CD8-positive, alpha-beta T cell (primary cell): ENCODE measurements at regions of chr10 and their contacts with region 1.

Region 1: GRCh38 chr10:69123747-69124562 is at the start of gene VPS26A:
- DNase-seq: peak; percentile 95 to 99 (median 98)
- ATAC-seq: peak; percentile 97
- H3K4me3 ChIP-seq: peak within 1 kb of the TSS; percentile 88 to 90
- H3K4me3 Mint-ChIP-seq: peak within 1 kb of the TSS; percentile 94
- H3K27ac ChIP-seq: peak within 1 kb of the TSS; percentile 94
- H3K27ac Mint-ChIP-seq: peak within 1 kb of the TSS; percentile 97
- H3K4me1 ChIP-seq: peaks cover 27% of the 10 kb centered on the region
- H3K4me1 Mint-ChIP-seq: peaks cover 30% of the 10 kb centered on the region
- H3K27me3 ChIP-seq: no peaks in the 10 kb centered on the region
- H3K27me3 Mint-ChIP-seq: no peaks in the 10 kb centered on the region
- CTCF ChIP-seq: peak; percentile 54
- total RNA-seq, gene VPS26A: 48.6 to 50.3 TPM

Region 2: DNA sequence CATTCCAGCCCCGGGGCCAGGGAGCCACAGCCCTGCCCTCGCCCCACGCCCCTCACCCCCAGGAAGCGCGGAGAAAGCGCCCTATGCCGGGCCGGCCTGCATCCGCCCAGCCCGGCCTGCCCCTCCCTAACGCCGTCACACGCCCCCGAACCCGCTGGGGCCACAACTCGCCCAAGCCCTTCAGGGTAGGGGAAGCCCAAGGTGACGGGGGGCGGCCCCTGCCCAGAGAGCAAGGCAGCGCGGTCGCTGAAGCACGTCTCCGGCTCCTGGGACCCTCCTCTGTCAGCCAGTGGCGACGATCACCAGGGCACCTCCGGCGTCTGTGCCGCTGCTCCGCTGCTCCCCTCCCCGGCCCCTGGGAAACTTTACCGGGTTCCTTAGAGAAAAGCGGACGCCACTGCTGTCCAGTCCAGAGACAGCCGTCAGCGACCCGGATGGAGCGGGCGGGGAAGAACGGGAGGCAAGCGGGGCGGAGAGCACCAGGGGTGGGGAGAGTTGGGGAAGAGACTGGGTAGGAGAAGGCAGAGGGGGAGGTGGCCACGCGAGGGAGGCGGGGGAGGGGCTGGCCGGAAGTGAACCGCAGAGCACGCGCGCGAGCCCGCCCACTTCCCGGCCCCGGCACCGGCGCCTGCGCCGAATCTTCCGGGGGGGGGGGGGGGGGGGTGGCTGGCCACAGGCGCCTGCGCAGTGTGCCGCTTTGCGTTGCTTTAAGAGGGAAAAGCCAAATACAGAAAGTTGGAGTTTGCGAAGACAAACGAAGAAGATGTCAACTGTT is 1049.0 kb before region 1 on chr10 and contains the start of gene HERC4:
- CTCF ChIA-PET with region 1: no interaction called
- POLR2A ChIA-PET with region 1: no interaction called
- intact Hi-C with region 1: loop called in 1 of 2 experiments (anchors 10 kb)
- DNase-seq: peak; percentile 83 to 96 (median 90)
- ATAC-seq: peak; percentile 90
- H3K4me3 ChIP-seq: peak within 1 kb of the TSS; percentile 96
- H3K4me3 Mint-ChIP-seq: peak within 1 kb of the TSS; percentile 96
- H3K27ac ChIP-seq: peak within 1 kb of the TSS; percentile 91 to 96
- H3K27ac Mint-ChIP-seq: peak within 1 kb of the TSS; percentile 93
- H3K4me1 ChIP-seq: peaks cover 38% of the 10 kb centered on the region
- H3K4me1 Mint-ChIP-seq: peaks cover 40% of the 10 kb centered on the region
- H3K27me3 ChIP-seq: no peaks in the 10 kb centered on the region
- H3K27me3 Mint-ChIP-seq: no peaks in the 10 kb centered on the region
- CTCF ChIP-seq: no peak
- total RNA-seq, gene HERC4: 28.4 to 29.2 TPM

Region 3: DNA sequence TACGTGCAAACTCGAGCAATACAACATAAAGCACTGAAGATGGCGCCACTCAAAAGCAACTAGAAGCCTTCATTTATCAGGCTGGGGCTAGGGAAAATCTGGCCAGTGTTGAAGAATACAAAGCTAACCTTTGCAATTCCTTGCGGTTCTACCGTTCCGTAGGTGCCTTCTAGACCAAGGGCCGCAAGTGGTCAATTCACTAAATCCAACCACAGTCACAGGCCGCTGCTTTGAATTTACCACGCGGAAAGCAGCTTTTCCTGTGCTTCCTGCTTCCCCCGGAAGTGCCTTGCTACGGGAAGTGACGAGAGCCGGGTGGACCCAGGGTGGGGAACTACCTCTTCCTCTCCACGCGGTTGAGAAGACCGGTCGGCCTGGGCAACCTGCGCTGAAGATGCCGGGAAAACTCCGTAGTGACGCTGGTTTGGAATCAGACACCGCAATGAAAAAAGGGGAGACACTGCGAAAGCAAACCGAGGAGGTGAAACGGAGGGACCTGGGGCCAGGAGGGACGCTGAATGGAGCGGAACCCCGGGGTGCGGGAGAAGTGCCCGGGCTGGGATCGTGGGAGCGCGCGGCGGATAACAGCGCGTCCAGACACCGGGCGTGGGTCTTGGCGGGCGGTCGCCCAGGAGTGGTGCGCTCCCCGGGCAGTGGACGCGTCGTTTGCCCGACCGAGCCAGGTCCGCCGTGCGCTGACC is 168.0 kb before region 1 on chr10 and contains the start of gene DDX21:
- CTCF ChIA-PET with region 1: no interaction called
- POLR2A ChIA-PET with region 1: interaction called, 4 read pairs
- intact Hi-C with region 1: loop called (anchors 1 to 2 kb)
- DNase-seq: peak; percentile 68 to 95 (median 89)
- ATAC-seq: peak; percentile 75
- H3K4me3 ChIP-seq: peak within 1 kb of the TSS; percentile 85 to 96
- H3K4me3 Mint-ChIP-seq: peak within 1 kb of the TSS; percentile 100
- H3K27ac ChIP-seq: peak within 1 kb of the TSS; percentile 95 to 99
- H3K27ac Mint-ChIP-seq: peak within 1 kb of the TSS; percentile 100
- H3K4me1 ChIP-seq: peaks cover 21% of the 10 kb centered on the region
- H3K4me1 Mint-ChIP-seq: peaks cover 41% of the 10 kb centered on the region
- H3K27me3 ChIP-seq: no peaks in the 10 kb centered on the region
- H3K27me3 Mint-ChIP-seq: no peaks in the 10 kb centered on the region
- CTCF ChIP-seq: peak; percentile 71
- total RNA-seq, gene DDX21: 175 to 185 TPM

Region 4: DNA sequence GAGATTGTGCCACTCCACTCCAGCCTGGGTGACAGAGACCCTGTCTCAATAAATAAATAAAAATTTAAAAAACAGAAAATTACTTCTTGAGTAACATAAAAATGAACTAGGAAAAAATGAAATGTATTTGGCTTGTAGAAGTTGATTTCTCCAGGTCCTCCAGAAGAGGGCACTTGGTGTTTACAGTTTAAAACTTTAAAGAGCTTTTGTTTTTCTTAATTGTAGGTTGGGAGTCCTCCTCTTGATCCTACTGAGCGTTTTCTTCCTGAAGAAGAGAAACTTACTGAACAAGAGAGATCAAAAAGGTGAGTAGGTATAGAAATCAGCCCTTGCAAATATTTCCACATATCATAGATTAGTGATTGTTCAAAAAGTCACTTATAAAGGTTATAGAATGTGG is 119.1 kb before region 1 on chr10:
- CTCF ChIA-PET with region 1: interaction called, 17 read pairs
- POLR2A ChIA-PET with region 1: interaction called, 3 read pairs
- intact Hi-C with region 1: loop called (anchors 1 kb)
- DNase-seq: peak in 2 of 9 experiments; percentile 61 to 74
- ATAC-seq: peak; percentile 87
- H3K4me3 ChIP-seq: no peak overlapping the region
- H3K4me3 Mint-ChIP-seq: no peak overlapping the region
- H3K27ac ChIP-seq: no peak overlapping the region
- H3K27ac Mint-ChIP-seq: no peak overlapping the region
- H3K4me1 ChIP-seq: no peaks in the 10 kb centered on the region
- H3K4me1 Mint-ChIP-seq: peaks cover 2% of the 10 kb centered on the region
- H3K27me3 ChIP-seq: no peaks in the 10 kb centered on the region
- H3K27me3 Mint-ChIP-seq: no peaks in the 10 kb centered on the region
- CTCF ChIP-seq: peak; percentile 76

Region 5: DNA sequence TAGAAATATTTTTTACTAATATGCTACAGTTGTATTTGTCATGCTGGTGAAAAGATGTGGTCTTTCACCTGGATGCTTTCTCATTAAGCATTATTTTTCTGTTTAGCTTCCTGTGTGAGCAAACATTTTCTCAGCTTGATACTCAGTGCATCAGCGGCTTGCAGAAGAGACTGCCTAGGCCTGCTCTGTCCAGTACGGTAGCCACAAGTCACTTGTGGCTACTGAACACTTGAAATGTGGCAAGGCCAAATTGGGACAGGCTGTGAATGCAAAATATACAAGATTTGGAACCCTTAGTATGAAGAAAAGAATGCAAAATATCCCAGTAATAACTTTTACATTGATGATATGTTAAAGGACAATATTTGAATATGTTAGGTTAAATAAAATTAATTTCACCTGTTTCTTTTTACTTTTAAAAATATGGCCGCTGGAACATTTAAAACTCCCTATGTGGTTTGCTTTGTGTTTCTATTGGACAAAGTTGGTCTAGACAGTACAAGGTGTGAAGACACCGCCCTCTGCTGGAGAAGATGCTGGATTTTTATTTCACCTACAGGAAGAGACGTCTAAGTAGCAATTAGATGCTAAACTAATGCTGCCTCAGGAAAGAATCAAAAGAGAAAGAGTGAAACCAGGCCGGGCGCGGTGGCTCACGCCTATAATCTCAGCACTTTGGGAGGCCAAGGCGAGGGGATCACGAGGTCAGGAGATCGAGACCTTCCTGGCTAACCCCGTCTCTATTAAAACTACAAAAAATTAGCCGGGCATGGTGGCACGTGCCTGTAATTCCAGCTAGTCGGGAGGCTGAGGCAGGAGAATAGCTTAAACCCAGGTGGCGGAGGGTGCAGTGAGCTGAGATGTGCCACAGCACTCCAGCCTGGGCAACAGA is 30.8 kb before region 1 on chr10:
- CTCF ChIA-PET with region 1: interaction called, 12 read pairs
- POLR2A ChIA-PET with region 1: interaction called, 3 read pairs
- intact Hi-C with region 1: loop called (anchors 1 kb)
- DNase-seq: peak; percentile 66 to 93 (median 83)
- ATAC-seq: peak; percentile 21
- H3K4me3 ChIP-seq: no peak overlapping the region
- H3K4me3 Mint-ChIP-seq: peak overlapping the region; percentile 26
- H3K27ac ChIP-seq: peak overlapping the region in 1 of 2 experiments; percentile 68
- H3K27ac Mint-ChIP-seq: peak overlapping the region; percentile 93
- H3K4me1 ChIP-seq: peaks cover 47% of the 10 kb centered on the region
- H3K4me1 Mint-ChIP-seq: peaks cover 69% of the 10 kb centered on the region
- H3K27me3 ChIP-seq: no peaks in the 10 kb centered on the region
- H3K27me3 Mint-ChIP-seq: no peaks in the 10 kb centered on the region
- CTCF ChIP-seq: peak; percentile 76

Region 6: DNA sequence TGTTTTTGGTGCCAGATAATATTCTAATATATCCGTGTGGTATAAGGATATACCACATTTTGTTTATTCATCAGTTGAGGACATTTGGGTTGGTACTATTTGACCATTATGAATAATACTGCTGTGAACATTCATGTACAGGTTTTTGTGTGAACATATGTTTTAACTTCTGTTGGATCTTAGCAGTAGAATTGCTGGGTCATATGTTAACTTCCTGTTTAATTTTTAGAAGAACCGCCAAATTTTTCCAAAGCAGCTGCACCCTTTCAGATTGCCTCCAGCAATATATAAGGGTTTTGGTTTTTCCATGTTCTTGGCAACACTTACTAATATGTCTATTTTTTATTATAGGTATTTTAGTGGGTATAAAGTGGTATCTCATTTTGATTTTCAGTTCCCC is 22.8 kb after region 1 on chr10:
- CTCF ChIA-PET with region 1: no interaction called
- POLR2A ChIA-PET with region 1: no interaction called
- intact Hi-C with region 1: no loop called
- DNase-seq: no peak
- ATAC-seq: no peak
- H3K4me3 ChIP-seq: no peak overlapping the region
- H3K4me3 Mint-ChIP-seq: no peak overlapping the region
- H3K27ac ChIP-seq: no peak overlapping the region
- H3K27ac Mint-ChIP-seq: peak overlapping the region; percentile 74
- H3K4me1 ChIP-seq: peaks cover 9% of the 10 kb centered on the region
- H3K4me1 Mint-ChIP-seq: peaks cover 48% of the 10 kb centered on the region
- H3K27me3 ChIP-seq: no peaks in the 10 kb centered on the region
- H3K27me3 Mint-ChIP-seq: no peaks in the 10 kb centered on the region
- CTCF ChIP-seq: no peak

Region 7: GRCh38 chr10:69179743-69180524 is 56.0 kb after region 1 on chr10 and contains the start of gene SUPV3L1:
- CTCF ChIA-PET with region 1: no interaction called
- POLR2A ChIA-PET with region 1: no interaction called
- intact Hi-C with region 1: loop called (anchors 1 to 2 kb)
- DNase-seq: peak; percentile 71 to 96 (median 87)
- ATAC-seq: peak; percentile 70
- H3K4me3 ChIP-seq: peak within 1 kb of the TSS; percentile 88 to 90
- H3K4me3 Mint-ChIP-seq: peak within 1 kb of the TSS; percentile 91
- H3K27ac ChIP-seq: peak within 1 kb of the TSS; percentile 97 to 98
- H3K27ac Mint-ChIP-seq: peak within 1 kb of the TSS; percentile 99
- H3K4me1 ChIP-seq: peaks cover 24% of the 10 kb centered on the region
- H3K4me1 Mint-ChIP-seq: peaks cover 41% of the 10 kb centered on the region
- H3K27me3 ChIP-seq: no peaks in the 10 kb centered on the region
- H3K27me3 Mint-ChIP-seq: no peaks in the 10 kb centered on the region
- CTCF ChIP-seq: no peak
- total RNA-seq, gene SUPV3L1: 89.3 to 99.6 TPM

Region 8: DNA sequence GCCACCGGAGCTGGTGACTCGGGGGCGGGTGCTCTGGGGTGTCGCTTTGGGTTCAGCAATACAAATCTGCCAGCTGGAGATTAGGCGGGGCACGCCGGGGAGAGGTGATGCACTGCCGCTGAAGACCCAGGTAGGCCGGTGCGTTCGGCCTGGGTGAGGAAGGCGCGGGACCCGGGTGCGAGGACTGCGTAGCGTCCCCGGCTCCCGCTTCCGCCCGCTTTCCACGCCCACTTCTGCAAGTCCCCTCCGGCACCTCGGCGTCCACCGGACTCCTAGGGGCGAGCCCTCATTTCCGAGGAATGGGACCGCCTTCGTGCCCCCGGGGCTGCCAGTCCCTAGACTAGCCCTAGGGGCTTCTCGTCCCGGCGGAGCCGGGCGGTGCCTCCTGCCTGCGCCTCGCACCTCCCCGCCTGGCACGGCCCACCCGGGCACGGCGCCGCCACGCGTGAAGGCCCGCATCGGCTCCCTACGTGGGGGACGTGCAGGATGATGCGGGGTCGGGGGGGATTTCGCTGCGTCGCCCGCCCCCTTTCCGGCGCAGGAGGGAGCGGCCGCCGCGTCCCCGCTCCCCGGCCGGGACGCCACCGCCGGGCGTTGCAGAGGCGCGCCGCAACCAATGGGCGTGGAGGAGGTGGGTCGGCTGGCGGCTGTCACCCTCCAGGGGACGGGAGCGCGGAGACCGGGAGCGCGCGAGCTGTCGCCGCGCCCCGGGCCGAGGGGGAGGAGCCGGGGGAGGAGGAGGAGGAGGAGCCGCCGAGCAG is 194.3 kb after region 1 on chr10:
- CTCF ChIA-PET with region 1: no interaction called
- POLR2A ChIA-PET with region 1: no interaction called
- intact Hi-C with region 1: loop called (anchors 1 kb)
- DNase-seq: peak; percentile 81 to 96 (median 90)
- ATAC-seq: peak; percentile 89
- H3K4me3 ChIP-seq: peak overlapping the region; percentile 92 to 99
- H3K4me3 Mint-ChIP-seq: peak overlapping the region; percentile 95
- H3K27ac ChIP-seq: peak overlapping the region; percentile 89 to 92
- H3K27ac Mint-ChIP-seq: peak overlapping the region; percentile 89
- H3K4me1 ChIP-seq: peaks cover 32% of the 10 kb centered on the region
- H3K4me1 Mint-ChIP-seq: peaks cover 38% of the 10 kb centered on the region
- H3K27me3 ChIP-seq: no peaks in the 10 kb centered on the region
- H3K27me3 Mint-ChIP-seq: no peaks in the 10 kb centered on the region
- CTCF ChIP-seq: no peak

Region 9: DNA sequence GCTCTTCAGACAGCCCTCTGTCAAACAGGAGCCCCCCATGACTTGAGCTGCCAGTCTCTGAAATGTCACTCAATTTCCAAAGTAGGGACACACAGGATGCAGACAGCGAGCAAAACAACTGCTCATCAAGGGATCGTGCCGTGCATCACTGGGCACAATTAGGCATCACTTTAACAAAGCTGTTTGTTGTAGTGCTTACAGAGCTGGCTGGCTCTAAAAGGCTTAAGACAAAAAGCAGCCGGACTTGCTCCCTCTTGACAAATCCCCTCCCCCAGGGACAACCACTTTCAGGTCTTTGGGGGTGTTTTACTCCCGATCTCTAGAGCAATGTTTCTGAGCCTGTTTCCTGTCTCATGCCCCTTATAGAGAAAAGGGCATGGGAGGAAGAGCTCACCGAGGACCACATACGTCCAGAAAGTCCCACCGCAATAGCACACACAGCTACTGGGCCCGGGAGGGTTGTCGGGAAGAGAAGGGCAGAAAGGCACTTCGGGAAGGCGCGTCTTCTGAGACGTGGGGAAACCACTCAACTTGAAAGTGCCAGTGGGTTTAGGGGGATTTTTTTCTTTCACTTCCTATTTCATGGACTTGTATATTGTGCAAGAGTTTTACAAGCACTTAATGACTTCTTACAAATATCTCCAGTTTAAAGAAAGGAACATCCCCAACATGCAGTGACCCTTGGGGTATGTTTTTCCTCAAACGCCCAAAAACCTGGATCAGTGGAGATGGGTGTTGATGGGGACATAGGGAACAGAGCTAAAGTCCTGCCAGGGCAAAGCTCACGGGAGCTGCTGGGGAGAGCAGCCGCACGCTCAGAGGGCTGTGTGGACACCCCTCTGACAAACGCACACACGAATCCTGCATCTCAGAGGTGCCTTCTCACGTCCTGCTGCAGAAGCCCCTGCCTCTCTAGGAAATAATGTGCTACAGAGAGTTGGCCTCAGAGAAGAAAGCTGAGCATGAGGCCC is 1231.4 kb after region 1 on chr10:
- CTCF ChIA-PET with region 1: no interaction called
- POLR2A ChIA-PET with region 1: no interaction called
- intact Hi-C with region 1: no loop called
- DNase-seq: peak in 2 of 9 experiments; percentile 20 to 61
- ATAC-seq: no peak
- H3K4me3 ChIP-seq: peak overlapping the region in 1 of 2 experiments; percentile 41
- H3K4me3 Mint-ChIP-seq: peak overlapping the region; percentile 75
- H3K27ac ChIP-seq: no peak overlapping the region
- H3K27ac Mint-ChIP-seq: no peak overlapping the region
- H3K4me1 ChIP-seq: no peaks in the 10 kb centered on the region
- H3K4me1 Mint-ChIP-seq: peaks cover 9% of the 10 kb centered on the region
- H3K27me3 ChIP-seq: no peaks in the 10 kb centered on the region
- H3K27me3 Mint-ChIP-seq: no peaks in the 10 kb centered on the region
- CTCF ChIP-seq: no peak